ENCODE measurements at regions of chrX and their contacts with region 1.

Region 1: DNA sequence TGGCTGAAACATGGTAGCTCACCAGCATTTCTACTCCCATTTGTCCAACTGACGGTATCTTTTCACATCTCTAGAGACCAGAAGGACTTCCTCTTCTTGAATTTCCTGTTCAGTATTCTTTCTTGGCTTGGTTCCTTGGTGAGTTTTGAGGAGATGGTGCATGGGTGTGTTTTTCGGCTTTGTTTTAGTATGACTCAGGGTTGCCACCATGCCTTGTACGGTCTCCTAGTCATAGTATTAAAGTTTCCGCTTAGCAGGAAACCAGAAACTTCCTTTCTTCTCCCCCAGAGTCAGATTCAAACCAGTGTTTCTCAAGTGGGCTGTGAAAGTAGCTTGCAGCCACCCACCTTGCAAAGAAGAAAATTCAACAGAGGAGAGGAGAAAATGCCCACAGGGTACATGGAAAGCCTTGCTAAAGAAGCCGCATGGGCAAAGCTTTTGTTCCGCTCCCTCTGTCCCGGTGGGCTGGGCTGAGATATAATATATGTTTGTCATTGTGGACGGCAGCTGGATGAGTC is 5.7 kb downstream of the CD99 start:
- DNase-seq: peak in 1 of 2 donors; percentile 84
- ATAC-seq: peak; percentile 73 to 82 (median 80)
- H3K4me3 ChIP-seq: peak overlapping the region; percentile 2
- H3K4me3 Mint-ChIP-seq: peak overlapping the region; percentile 74
- H3K27ac ChIP-seq: peak overlapping the region; percentile 70
- H3K27ac Mint-ChIP-seq: peak overlapping the region; percentile 86 to 88
- H3K4me1 ChIP-seq: peaks cover 91% of the 10 kb centered on the region
- H3K4me1 Mint-ChIP-seq: peaks cover 92 to 95% of the 10 kb centered on the region in 2 donors
- H3K27me3 ChIP-seq: no peaks in the 10 kb centered on the region
- H3K27me3 Mint-ChIP-seq: no peaks in the 10 kb centered on the region
- CTCF ChIP-seq: no peak

Region 2: GRCh38 chrX:2627272-2627867 is 69.4 kb before region 1 on chrX:
- intact Hi-C with region 1: loop called (anchors 5 kb)
- DNase-seq: peak in 1 of 2 donors; percentile 70
- ATAC-seq: peak; percentile 43 to 57 (median 49)
- H3K4me3 ChIP-seq: no peak overlapping the region
- H3K4me3 Mint-ChIP-seq: no peak overlapping the region
- H3K27ac ChIP-seq: no peak overlapping the region
- H3K27ac Mint-ChIP-seq: peak overlapping the region; percentile 95 to 96
- H3K4me1 ChIP-seq: peaks cover 10% of the 10 kb centered on the region
- H3K4me1 Mint-ChIP-seq: peaks cover 36 to 41% of the 10 kb centered on the region in 2 donors
- H3K27me3 ChIP-seq: no peaks in the 10 kb centered on the region
- H3K27me3 Mint-ChIP-seq: no peaks in the 10 kb centered on the region
- CTCF ChIP-seq: no peak

Region 3: DNA sequence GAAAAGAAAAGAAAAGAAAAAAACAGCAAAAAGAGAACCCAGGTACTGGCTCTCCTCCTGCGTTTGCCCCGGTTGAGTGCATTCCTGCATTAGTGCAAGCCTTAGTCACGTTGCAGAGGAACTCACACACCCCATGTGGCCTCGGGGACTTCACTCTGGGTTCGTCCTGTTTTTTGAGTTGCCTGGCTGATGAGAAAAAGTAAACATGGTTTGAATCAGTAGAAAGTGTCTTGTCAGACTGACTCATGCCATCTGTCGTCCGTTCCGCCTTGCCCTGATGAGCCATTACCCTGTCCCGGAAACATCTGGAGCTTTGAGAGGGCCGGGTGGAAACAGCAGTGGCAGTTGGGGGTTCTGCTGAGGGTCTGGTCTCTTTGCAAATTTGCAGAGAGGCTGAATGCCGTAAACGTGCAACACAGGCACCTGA is 10.6 kb after region 1 on chrX:
- intact Hi-C with region 1: loop called (anchors 1 kb)
- DNase-seq: peak; percentile 47 to 72
- ATAC-seq: peak; percentile 64 to 72 (median 69)
- H3K4me3 ChIP-seq: no peak overlapping the region
- H3K4me3 Mint-ChIP-seq: peak overlapping the region; percentile 65
- H3K27ac ChIP-seq: peak overlapping the region; percentile 40
- H3K27ac Mint-ChIP-seq: peak overlapping the region; percentile 82 to 87
- H3K4me1 ChIP-seq: peaks cover 70% of the 10 kb centered on the region
- H3K4me1 Mint-ChIP-seq: peaks cover 58 to 70% of the 10 kb centered on the region in 2 donors
- H3K27me3 ChIP-seq: no peaks in the 10 kb centered on the region
- H3K27me3 Mint-ChIP-seq: no peaks in the 10 kb centered on the region
- CTCF ChIP-seq: no peak

Measured in natural killer cell (primary cell).